HEK293 (cell line): ENCODE measurements at regions of chr11 and their contacts with region 1.

Region 1: DNA sequence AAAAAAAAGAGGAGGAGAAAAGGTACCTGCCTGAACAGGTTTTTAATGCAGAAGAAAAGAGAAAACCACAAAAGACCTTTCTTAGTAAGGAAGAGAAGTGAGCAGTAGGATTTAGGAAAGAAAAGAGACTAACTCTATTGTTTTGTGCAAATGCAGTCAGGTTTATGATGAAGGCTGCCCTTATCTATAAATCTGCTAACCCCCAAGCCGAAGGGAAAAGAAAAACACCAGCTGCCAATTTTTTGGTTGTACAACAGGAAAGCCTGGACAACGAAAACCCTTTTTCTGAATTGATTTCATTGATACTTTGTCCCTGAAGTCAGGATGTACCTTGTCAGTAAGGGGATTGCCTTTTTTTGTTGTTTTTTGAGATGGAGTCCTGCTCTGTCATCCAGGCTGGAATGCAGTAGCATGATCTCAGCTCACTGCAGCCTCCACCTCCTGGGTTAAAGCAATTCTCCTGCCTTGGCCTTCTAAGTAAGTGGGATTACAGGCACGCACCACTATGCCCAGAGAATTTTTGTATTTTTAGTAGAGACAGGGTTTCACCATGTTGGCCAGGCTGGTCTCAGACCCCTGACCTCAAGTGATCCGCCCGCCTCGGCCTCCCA is 21.2 kb downstream of the POLD4 start:
- H3K4me3 ChIP-seq: no peak overlapping the region
- H3K27ac ChIP-seq: no peak overlapping the region
- H3K4me1 ChIP-seq: no peaks in the 10 kb centered on the region
- CTCF ChIP-seq: no peak

Region 2: GRCh38 chr11:67301951-67302516 is 30.2 kb before region 1 on chr11:
- CTCF ChIA-PET with region 1: no interaction called
- POLR2A ChIA-PET with region 1: no interaction called
- H3K4me3 ChIP-seq: no peak overlapping the region
- H3K27ac ChIP-seq: peak overlapping the region; percentile 53; the same call in 1 of the 2 replicates
- H3K4me1 ChIP-seq: no peaks in the 10 kb centered on the region
- CTCF ChIP-seq: no peak

Region 3: GRCh38 chr11:67391304-67392132 is 59.3 kb after region 1 on chr11 and contains the start of gene RAD9A:
- CTCF ChIA-PET with region 1: interaction called, 4 read pairs
- POLR2A ChIA-PET with region 1: interaction called, 11 read pairs
- H3K4me3 ChIP-seq: peak within 1 kb of the TSS; percentile 76
- H3K27ac ChIP-seq: peak within 1 kb of the TSS; percentile 67
- H3K4me1 ChIP-seq: 0 out of 2 replicates have a peak, but pooled peaks cover 3% of the 10 kb centered on the region
- CTCF ChIP-seq: no peak; the same call in 1 of the 2 replicates